ENCODE measurements at regions of chr2 and their contacts with region 1.

Region 1: GRCh38 chr2:220335591-220335915 is 708.1 kb downstream of the SLC4A3 start:
- DNase-seq: peak; percentile 54
- H3K4me3 ChIP-seq: no peak overlapping the region
- H3K27ac ChIP-seq: peak overlapping the region; percentile 96
- H3K4me1 ChIP-seq: peaks cover 47% of the 10 kb centered on the region
- H3K27me3 ChIP-seq: no peaks in the 10 kb centered on the region
- CTCF ChIP-seq: no peak

Region 2: DNA sequence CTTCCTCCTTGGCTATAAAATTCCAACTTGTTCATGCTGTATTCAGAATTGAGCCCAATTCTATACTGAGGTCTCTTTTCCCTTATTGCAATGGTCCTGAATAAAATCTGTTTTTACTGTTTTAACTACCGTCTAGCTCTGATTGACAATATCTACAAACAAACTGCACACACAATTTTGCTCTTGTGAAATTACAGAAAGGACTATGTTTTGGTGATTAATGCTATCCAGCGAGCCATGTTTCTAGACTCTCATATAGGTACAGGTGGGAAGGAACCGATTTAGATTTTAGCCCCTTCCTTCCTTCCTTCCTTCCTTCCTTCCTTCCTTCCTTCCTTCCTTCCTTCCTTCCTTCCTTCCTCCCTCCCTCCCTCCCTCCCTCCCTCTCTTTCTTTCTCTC is 453.7 kb before region 1 on chr2:
- CTCF ChIA-PET with region 1: no interaction called
- POLR2A ChIA-PET with region 1: no interaction called
- intact Hi-C with region 1: loop called (anchors 2 kb)
- DNase-seq: peak; percentile 64
- H3K4me3 ChIP-seq: no peak overlapping the region
- H3K27ac ChIP-seq: peak overlapping the region; percentile 35
- H3K4me1 ChIP-seq: peaks cover 13% of the 10 kb centered on the region
- H3K27me3 ChIP-seq: no peaks in the 10 kb centered on the region
- CTCF ChIP-seq: no peak

Region 3: DNA sequence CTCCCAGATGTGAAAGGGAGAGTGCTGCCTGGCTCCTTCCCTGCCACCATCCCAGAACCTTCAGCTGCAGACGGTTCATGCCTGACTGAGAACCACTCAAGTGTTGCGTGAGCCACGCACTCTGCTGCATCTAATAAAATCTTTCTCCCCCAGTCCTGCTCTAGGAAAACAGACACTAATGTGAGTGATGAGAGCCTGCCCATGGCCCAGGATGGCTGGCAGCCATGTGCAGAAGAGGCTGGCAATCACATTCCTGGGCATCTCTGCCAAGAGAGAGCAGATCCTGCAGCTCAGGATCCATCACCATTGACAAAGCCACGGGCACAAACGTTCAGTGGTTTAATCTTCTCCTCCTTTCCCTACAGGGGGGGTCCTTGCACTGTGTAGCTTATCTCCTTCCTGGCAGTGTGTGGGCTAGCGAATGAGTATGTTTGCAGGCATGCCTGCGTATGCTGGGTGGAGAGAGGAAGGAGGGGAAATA is 230.6 kb before region 1 on chr2:
- CTCF ChIA-PET with region 1: interaction called, 12 read pairs
- POLR2A ChIA-PET with region 1: no interaction called
- intact Hi-C with region 1: loop called (anchors 2 kb)
- DNase-seq: peak; percentile 91
- H3K4me3 ChIP-seq: no peak overlapping the region
- H3K27ac ChIP-seq: no peak overlapping the region
- H3K4me1 ChIP-seq: peaks cover 19% of the 10 kb centered on the region
- H3K27me3 ChIP-seq: no peaks in the 10 kb centered on the region
- CTCF ChIP-seq: peak; percentile 61

Region 4: DNA sequence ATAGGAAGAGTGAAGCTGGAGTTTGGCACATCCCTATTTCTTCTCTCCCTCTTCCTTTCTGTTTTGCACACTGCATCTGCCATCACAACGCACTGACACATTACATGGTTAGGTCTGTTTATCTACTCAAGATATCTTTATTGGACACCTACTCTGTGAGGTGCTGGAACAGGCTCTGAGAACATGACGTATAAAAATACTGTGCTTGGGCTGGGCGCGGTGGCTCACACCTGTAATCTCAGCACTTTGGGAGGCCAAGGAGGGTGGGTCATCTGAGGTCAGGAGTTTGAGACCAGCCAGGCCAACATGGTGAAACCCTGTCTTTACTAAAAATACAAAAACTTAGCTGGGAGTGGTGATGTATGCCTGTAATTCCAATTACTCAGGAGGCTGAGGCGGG is 54.8 kb before region 1 on chr2:
- CTCF ChIA-PET with region 1: interaction called, 3 read pairs
- POLR2A ChIA-PET with region 1: no interaction called
- intact Hi-C with region 1: loop called (anchors 1 kb)
- DNase-seq: no peak
- H3K4me3 ChIP-seq: no peak overlapping the region
- H3K27ac ChIP-seq: peak overlapping the region; percentile 74
- H3K4me1 ChIP-seq: peaks cover 34% of the 10 kb centered on the region
- H3K27me3 ChIP-seq: no peaks in the 10 kb centered on the region
- CTCF ChIP-seq: no peak

Region 5: DNA sequence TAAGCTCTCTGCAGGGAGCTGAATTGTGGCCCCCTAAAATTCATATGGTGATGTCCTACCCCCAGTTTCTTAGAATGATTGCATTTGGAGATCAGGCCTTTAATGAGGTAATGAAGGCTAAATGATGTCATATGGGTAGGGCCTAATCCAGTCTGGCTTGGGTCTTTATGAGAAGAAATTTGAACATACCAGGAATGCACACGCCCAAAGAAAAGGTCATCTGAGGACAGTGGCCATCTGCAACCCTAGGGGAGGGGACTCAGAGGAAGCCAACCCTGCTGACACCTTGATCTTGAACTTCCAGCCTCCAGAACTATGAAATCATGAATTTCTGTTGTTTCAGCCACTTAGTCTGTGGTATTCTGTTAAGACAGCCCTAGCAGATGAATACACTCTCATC is 809.8 kb after region 1 on chr2:
- CTCF ChIA-PET with region 1: no interaction called
- POLR2A ChIA-PET with region 1: no interaction called
- intact Hi-C with region 1: no loop called
- DNase-seq: no peak
- H3K4me3 ChIP-seq: no peak overlapping the region
- H3K27ac ChIP-seq: no peak overlapping the region
- H3K4me1 ChIP-seq: no peaks in the 10 kb centered on the region
- H3K27me3 ChIP-seq: no peaks in the 10 kb centered on the region
- CTCF ChIP-seq: no peak

Region 6: GRCh38 chr2:221573430-221574230 is 1238.1 kb after region 1 on chr2:
- CTCF ChIA-PET with region 1: interaction called, 4 read pairs
- POLR2A ChIA-PET with region 1: no interaction called
- intact Hi-C with region 1: loop called (anchors 2 kb)
- DNase-seq: peak; percentile 91
- H3K4me3 ChIP-seq: peak overlapping the region; percentile 84
- H3K27ac ChIP-seq: peak overlapping the region; percentile 85
- H3K4me1 ChIP-seq: peaks cover 18% of the 10 kb centered on the region
- H3K27me3 ChIP-seq: peaks cover 4% of the 10 kb centered on the region
- CTCF ChIP-seq: peak; percentile 98